Activated B cell treated with CpG ODN at 0.5 μM for 24 hours (primary cell): ENCODE measurements at regions of chr6 and their contacts with region 1.

Region 1: DNA sequence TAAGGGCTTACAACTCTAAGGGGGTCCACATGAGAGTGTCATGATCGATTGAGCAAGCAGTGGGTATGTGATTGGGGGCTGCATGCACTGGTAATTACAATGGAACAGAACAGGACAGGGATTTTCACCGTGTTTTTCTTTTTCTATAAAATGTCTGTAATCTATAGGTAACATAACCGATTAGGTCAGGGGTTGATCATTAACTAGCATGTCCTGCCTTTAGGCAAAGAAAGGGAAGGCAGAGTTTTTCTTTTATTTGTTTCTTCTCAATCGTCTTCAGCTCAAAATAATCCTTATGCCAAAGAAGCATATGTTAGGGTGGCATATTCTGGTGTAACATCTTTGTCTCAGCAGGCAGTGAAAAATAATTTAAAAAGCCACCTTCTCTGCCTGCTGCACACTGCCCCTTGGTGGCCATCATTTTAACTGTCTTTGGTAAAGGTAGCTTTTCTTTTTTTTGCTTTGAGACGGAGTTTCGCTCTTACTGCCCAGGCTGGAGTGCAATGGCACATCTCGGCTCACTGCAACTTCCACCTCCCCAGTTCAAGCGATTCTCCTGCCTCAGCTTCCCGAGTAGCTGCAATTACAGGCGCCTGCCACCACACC is 9.7 kb upstream of the CEP43 start:
- DNase-seq: peak; percentile 22
- ATAC-seq: peak; percentile 99
- H3K4me3 Mint-ChIP-seq: no peak overlapping the region
- H3K27ac Mint-ChIP-seq: no peak overlapping the region
- H3K4me1 Mint-ChIP-seq: peaks cover 11% of the 10 kb centered on the region
- H3K27me3 Mint-ChIP-seq: no peaks in the 10 kb centered on the region
- CTCF ChIP-seq: peak; percentile 40

Region 2: GRCh38 chr6:166775180-166776081 is 214.1 kb before region 1 on chr6:
- CTCF ChIA-PET with region 1: interaction called, 41 read pairs
- POLR2A ChIA-PET with region 1: no interaction called
- intact Hi-C with region 1: loop called (anchors 1 kb)
- DNase-seq: no peak
- ATAC-seq: peak; percentile 60
- H3K4me3 Mint-ChIP-seq: no peak overlapping the region
- H3K27ac Mint-ChIP-seq: no peak overlapping the region
- H3K4me1 Mint-ChIP-seq: no peaks in the 10 kb centered on the region
- H3K27me3 Mint-ChIP-seq: peaks cover 13% of the 10 kb centered on the region
- CTCF ChIP-seq: peak; percentile 45

Region 3: DNA sequence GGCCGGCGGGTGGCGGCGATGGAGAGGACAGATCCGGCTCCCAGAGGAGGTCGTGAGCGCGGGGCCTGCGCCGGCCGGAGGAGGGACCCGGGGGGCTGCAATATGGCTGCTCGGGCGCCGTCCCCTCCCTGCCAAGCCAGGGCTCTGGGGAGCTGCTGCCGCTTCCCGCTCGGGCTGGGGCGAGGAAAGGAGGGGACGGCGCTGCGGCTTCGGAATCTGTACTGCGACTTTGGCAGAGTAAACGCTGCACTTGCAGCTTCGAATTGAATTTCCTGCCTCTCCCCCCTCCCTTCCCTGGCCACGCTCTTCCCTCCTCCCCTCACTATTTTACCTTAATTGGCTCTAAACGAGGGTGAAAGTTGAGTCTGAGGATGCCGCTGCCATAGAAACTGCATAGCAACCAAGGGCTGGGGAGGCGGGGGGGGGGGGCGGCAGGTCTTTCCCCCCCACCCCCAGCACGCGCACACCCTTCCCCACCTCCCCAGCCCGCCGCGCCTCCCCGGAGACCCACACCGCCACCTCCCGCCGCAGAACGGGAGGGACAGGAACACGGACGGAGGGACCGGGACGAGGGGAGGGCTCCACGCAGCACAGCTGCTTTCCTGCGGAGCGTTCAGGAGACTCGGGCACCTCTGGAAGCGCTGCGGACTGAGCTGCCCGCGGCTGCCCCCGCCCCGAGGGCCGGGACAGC is 127.1 kb before region 1 on chr6:
- CTCF ChIA-PET with region 1: interaction called, 8 read pairs
- POLR2A ChIA-PET with region 1: no interaction called
- intact Hi-C with region 1: loop called (anchors 2 kb)
- DNase-seq: peak; percentile 28
- ATAC-seq: peak; percentile 74
- H3K4me3 Mint-ChIP-seq: peak overlapping the region; percentile 82
- H3K27ac Mint-ChIP-seq: no peak overlapping the region
- H3K4me1 Mint-ChIP-seq: peaks cover 6% of the 10 kb centered on the region
- H3K27me3 Mint-ChIP-seq: peaks cover 13% of the 10 kb centered on the region
- CTCF ChIP-seq: no peak

Region 4: GRCh38 chr6:166940643-166941068 is 48.9 kb before region 1 on chr6:
- CTCF ChIA-PET with region 1: interaction called, 14 read pairs
- POLR2A ChIA-PET with region 1: interaction called, 4 read pairs
- intact Hi-C with region 1: no loop called
- DNase-seq: no peak
- ATAC-seq: no peak
- H3K4me3 Mint-ChIP-seq: no peak overlapping the region
- H3K27ac Mint-ChIP-seq: peak overlapping the region; percentile 50
- H3K4me1 Mint-ChIP-seq: peaks cover 26% of the 10 kb centered on the region
- H3K27me3 Mint-ChIP-seq: no peaks in the 10 kb centered on the region
- CTCF ChIP-seq: no peak

Region 5: GRCh38 chr6:167285077-167285770 is 295.7 kb after region 1 on chr6:
- CTCF ChIA-PET with region 1: interaction called, 3 read pairs
- POLR2A ChIA-PET with region 1: no interaction called
- intact Hi-C with region 1: loop called (anchors 5 kb)
- DNase-seq: no peak
- ATAC-seq: no peak
- H3K4me3 Mint-ChIP-seq: no peak overlapping the region
- H3K27ac Mint-ChIP-seq: no peak overlapping the region
- H3K4me1 Mint-ChIP-seq: no peaks in the 10 kb centered on the region
- H3K27me3 Mint-ChIP-seq: peaks cover 1% of the 10 kb centered on the region
- CTCF ChIP-seq: no peak